Activated B cell treated with CpG ODN at 0.5 μM for 24 hours (primary cell): ENCODE measurements at regions of chr6 and their contacts with region 1.

Region 1: DNA sequence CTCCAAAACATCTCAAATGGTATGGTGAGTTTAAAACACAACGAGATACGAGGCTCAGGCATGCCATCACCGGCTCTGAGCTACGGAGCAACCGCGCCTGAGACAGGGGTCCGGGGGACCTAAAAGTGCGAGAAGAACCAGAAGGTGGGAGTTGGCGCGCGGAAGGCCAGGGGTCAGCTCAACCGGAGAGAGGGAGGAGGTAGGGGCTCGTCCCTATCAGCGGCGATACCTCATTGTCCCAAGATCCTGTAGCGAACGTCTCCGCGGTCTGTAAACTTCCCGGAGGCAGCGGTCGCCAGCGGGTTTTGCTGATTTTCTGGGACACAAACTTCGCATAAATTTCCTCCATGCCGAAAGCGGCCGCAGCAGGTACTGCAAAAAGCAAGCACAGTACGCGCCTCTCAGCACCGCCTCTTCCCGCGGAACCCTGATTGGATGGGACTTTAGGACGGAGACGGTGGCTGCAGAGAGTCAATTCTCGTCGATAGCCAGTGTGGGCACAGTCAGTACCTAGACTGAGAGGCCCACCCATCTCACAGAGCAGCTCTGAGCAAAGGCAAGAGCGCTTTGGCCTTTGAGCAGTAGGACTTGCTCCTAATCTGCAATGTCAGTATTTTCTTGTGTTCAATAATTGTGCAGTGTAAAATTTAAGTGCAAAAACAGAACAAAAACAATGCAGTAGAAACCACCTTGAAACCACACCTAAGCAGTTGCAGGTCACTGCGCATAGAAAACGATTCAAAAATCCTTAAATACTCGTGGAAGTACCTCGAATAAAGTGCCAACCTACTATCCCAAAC is at the start of gene NUP43:
- DNase-seq: peak; percentile 80
- ATAC-seq: peak; percentile 69
- H3K4me3 Mint-ChIP-seq: peak within 1 kb of the TSS; percentile 97
- H3K27ac Mint-ChIP-seq: peak within 1 kb of the TSS; percentile 89
- H3K4me1 Mint-ChIP-seq: peaks cover 29% of the 10 kb centered on the region
- H3K27me3 Mint-ChIP-seq: no peaks in the 10 kb centered on the region
- CTCF ChIP-seq: no peak
- total RNA-seq, gene NUP43: 46.9 and 50.4 TPM in 2 replicates

Region 2: DNA sequence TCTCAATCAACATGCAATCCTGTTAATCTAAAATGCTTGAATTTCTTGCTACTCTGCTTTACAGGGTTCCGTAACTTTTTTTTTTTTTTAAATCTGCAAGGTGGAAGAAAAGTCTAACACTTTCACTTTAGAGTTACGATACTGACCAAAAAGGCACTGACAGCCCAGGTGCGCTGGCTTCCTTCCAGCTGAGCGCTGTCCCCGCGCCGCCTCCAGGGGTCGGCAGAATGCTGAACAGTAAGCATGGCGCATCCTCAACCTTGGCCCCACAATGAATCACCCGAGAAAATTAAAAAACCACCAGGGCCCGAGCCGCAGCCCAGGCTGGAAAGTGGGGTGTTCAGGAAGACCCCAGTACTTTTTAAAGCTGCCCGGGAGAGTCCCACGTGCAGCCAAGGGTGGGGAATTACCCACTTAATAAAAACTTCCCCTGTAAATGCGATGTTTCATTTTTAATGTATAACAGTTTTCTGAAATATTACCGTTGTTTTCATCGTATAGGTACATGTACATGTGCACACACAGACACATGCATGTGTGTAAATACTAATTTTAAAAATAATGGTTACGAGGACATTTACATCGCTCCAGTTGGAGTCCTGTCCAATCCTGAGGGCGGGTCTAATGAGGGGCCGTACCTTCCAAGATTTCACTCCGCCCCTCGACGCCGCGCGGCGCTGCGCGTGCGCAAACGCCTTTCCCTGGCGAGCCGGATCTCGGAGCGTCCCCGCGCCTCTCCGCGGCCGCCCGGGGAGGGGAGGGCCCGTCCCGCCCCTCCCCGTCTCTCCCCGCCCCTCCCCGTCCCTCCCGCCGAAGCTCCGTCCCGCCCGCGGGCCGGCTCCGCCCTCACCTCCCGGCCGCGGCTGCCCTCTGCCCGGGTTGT is 180.6 kb before region 1 on chr6 and contains the start of gene GINM1:
- CTCF ChIA-PET with region 1: interaction called, 3 read pairs
- POLR2A ChIA-PET with region 1: interaction called, 8 read pairs
- intact Hi-C with region 1: loop called (anchors 2 kb)
- DNase-seq: peak; percentile 97
- ATAC-seq: peak; percentile 85
- H3K4me3 Mint-ChIP-seq: peak within 1 kb of the TSS; percentile 93
- H3K27ac Mint-ChIP-seq: peak within 1 kb of the TSS; percentile 92
- H3K4me1 Mint-ChIP-seq: peaks cover 22% of the 10 kb centered on the region
- H3K27me3 Mint-ChIP-seq: no peaks in the 10 kb centered on the region
- CTCF ChIP-seq: no peak
- total RNA-seq, gene GINM1: 15.4 and 18.0 TPM in 2 replicates

Region 3: GRCh38 chr6:149761438-149761837 is 15.1 kb after region 1 on chr6:
- CTCF ChIA-PET with region 1: no interaction called
- POLR2A ChIA-PET with region 1: interaction called, 3 read pairs
- intact Hi-C with region 1: loop called (anchors 1 kb)
- DNase-seq: no peak
- ATAC-seq: peak; percentile 96
- H3K4me3 Mint-ChIP-seq: no peak overlapping the region
- H3K27ac Mint-ChIP-seq: peak overlapping the region; percentile 78
- H3K4me1 Mint-ChIP-seq: peaks cover 22% of the 10 kb centered on the region
- H3K27me3 Mint-ChIP-seq: no peaks in the 10 kb centered on the region
- CTCF ChIP-seq: no peak

Region 4: GRCh38 chr6:149903938-149904611 is 157.7 kb after region 1 on chr6:
- CTCF ChIA-PET with region 1: no interaction called
- POLR2A ChIA-PET with region 1: no interaction called
- intact Hi-C with region 1: no loop called
- DNase-seq: no peak
- ATAC-seq: no peak
- H3K4me3 Mint-ChIP-seq: no peak overlapping the region
- H3K27ac Mint-ChIP-seq: no peak overlapping the region
- H3K4me1 Mint-ChIP-seq: no peaks in the 10 kb centered on the region
- H3K27me3 Mint-ChIP-seq: peaks cover 15% of the 10 kb centered on the region
- CTCF ChIP-seq: no peak

Region 5: GRCh38 chr6:150153542-150153876 is 407.2 kb after region 1 on chr6:
- CTCF ChIA-PET with region 1: no interaction called
- POLR2A ChIA-PET with region 1: no interaction called
- intact Hi-C with region 1: no loop called
- DNase-seq: no peak
- ATAC-seq: no peak
- H3K4me3 Mint-ChIP-seq: no peak overlapping the region
- H3K27ac Mint-ChIP-seq: no peak overlapping the region
- H3K4me1 Mint-ChIP-seq: peaks cover 3% of the 10 kb centered on the region
- H3K27me3 Mint-ChIP-seq: peaks cover 44% of the 10 kb centered on the region
- CTCF ChIP-seq: no peak